ENCODE measurements at regions of chr16 and their contacts with region 1.

Region 1: GRCh38 chr16:48409839-48410611 is 24.8 kb upstream of the SIAH1 start:
- DNase-seq: peak; percentile 81 to 87
- H3K4me3 ChIP-seq: no peak overlapping the region
- H3K4me3 Mint-ChIP-seq: peak overlapping the region; percentile 43
- H3K27ac Mint-ChIP-seq: peak overlapping the region; percentile 94
- H3K4me1 ChIP-seq: peaks cover 31% of the 10 kb centered on the region
- H3K4me1 Mint-ChIP-seq: peaks cover 20% of the 10 kb centered on the region
- H3K27me3 ChIP-seq: no peaks in the 10 kb centered on the region
- H3K27me3 Mint-ChIP-seq: no peaks in the 10 kb centered on the region
- CTCF ChIP-seq: no peak

Region 2: GRCh38 chr16:48609652-48610029 is 199.6 kb after region 1 on chr16:
- CTCF ChIA-PET with region 1: no interaction called
- POLR2A ChIA-PET with region 1: no interaction called
- intact Hi-C with region 1: loop called (anchors 5 kb)
- DNase-seq: peak in 1 of 2 experiments; percentile 61
- H3K4me3 ChIP-seq: peak overlapping the region; percentile 95
- H3K4me3 Mint-ChIP-seq: peak overlapping the region; percentile 85
- H3K27ac Mint-ChIP-seq: peak overlapping the region; percentile 98
- H3K4me1 ChIP-seq: peaks cover 54% of the 10 kb centered on the region
- H3K4me1 Mint-ChIP-seq: peaks cover 6% of the 10 kb centered on the region
- H3K27me3 ChIP-seq: no peaks in the 10 kb centered on the region
- H3K27me3 Mint-ChIP-seq: no peaks in the 10 kb centered on the region
- CTCF ChIP-seq: no peak